ENCODE measurements at regions of chr3 and their contacts with region 1.

Region 1: DNA sequence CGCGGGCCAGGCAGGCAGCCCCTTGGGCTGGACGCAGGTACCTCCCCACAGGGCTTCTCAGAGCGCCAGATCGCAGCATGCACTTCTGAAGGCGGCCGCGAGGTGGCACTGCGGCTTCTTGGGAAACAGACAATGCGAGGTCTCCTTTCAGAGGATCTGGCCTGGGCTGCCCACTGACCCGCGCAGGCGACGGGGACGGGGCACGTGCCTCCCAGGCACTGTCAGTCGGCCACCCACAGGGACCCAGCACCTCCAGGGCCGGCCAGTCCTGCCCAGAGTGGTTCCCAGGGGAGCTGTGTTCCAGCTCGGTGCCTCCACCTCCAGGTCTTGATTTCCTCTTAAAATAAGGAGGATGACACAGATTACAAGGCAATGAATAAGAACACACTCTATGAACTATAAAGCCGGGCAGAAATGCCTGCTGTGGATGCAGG is 24.4 kb upstream of the TXNRD3 start:
- DNase-seq: peak; percentile 59 to 88
- H3K4me3 ChIP-seq: no peak overlapping the region
- H3K27ac ChIP-seq: no peak overlapping the region
- H3K4me1 ChIP-seq: no peaks in the 10 kb centered on the region
- H3K27me3 ChIP-seq: peaks cover 12% of the 10 kb centered on the region
- CTCF ChIP-seq: peak; percentile 97

Region 2: DNA sequence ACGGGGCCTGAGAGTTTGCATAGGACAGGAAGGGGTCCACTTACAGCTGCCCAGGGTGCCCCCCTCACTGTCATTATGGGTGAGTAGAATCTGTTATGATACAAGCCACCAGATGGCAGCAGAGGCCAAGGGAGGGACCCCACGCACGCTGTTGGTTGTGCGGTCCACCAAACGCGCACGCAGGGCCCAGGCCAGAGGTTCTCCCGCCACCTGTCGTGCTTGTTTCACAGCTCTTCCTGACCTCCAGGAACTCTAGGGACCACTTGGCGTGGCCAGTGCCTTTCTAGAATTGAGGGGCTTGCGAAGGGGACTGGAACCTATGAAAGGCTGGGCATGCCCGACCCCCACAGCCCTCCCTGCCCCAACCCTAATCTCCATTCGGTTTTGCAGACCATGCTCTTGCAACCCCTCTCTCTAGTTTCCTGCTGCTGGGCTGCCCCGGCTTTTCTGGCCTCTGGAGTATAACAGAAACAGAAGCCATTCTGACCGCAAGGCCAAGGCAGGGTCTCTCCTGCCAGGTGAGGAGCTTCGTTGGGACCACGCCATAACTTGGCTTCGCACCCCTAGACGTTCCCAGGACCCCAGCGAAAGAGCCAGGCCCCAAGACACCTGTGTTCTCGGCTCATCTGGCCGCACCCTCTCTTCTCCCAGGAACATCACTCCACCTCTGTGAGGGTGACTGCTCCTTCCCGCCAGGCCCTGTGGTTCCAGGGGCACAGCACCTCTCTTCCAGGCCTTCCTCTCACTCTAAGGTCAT is 544.9 kb before region 1 on chr3:
- CTCF ChIA-PET with region 1: no interaction called
- POLR2A ChIA-PET with region 1: no interaction called
- intact Hi-C with region 1: no loop called
- DNase-seq: peak in 1 of 2 experiments; percentile 56
- H3K4me3 ChIP-seq: no peak overlapping the region
- H3K27ac ChIP-seq: no peak overlapping the region
- H3K4me1 ChIP-seq: peaks cover 15% of the 10 kb centered on the region
- H3K27me3 ChIP-seq: no peaks in the 10 kb centered on the region
- CTCF ChIP-seq: peak; percentile 85

Region 3: GRCh38 chr3:126447456-126448106 is 231.8 kb before region 1 on chr3:
- CTCF ChIA-PET with region 1: no interaction called
- POLR2A ChIA-PET with region 1: no interaction called
- intact Hi-C with region 1: no loop called
- DNase-seq: no peak
- H3K4me3 ChIP-seq: no peak overlapping the region
- H3K27ac ChIP-seq: no peak overlapping the region
- H3K4me1 ChIP-seq: no peaks in the 10 kb centered on the region
- H3K27me3 ChIP-seq: no peaks in the 10 kb centered on the region
- CTCF ChIP-seq: no peak

Region 4: GRCh38 chr3:126746395-126747177 is 67.3 kb after region 1 on chr3:
- CTCF ChIA-PET with region 1: no interaction called
- POLR2A ChIA-PET with region 1: no interaction called
- intact Hi-C with region 1: loop called (anchors 1 kb)
- DNase-seq: peak in 1 of 2 experiments; percentile 66
- H3K4me3 ChIP-seq: no peak overlapping the region
- H3K27ac ChIP-seq: no peak overlapping the region
- H3K4me1 ChIP-seq: no peaks in the 10 kb centered on the region
- H3K27me3 ChIP-seq: no peaks in the 10 kb centered on the region
- CTCF ChIP-seq: no peak